ENCODE measurements at regions of chr18 and their contacts with region 1.

Region 1: GRCh38 chr18:44679056-44679905 is 1.4 kb upstream of the SETBP1 start:
- DNase-seq: no peak
- ATAC-seq: peak; percentile 87
- H3K4me3 ChIP-seq: peak overlapping the region; percentile 78
- H3K27ac ChIP-seq: peak overlapping the region; percentile 82
- H3K4me1 ChIP-seq: peaks cover 14% of the 10 kb centered on the region
- H3K27me3 ChIP-seq: peaks cover 0 to 3% of the 10 kb centered on the region in 2 experiments; a peak in 1 of 4 replicates
- CTCF ChIP-seq: peak; percentile 68 to 92 (median 76)
- EP300 ChIP-seq: no peak
- POLR2A ChIP-seq: peak; percentile 56
- RAD21 ChIP-seq: peak; percentile 90

Region 2: DNA sequence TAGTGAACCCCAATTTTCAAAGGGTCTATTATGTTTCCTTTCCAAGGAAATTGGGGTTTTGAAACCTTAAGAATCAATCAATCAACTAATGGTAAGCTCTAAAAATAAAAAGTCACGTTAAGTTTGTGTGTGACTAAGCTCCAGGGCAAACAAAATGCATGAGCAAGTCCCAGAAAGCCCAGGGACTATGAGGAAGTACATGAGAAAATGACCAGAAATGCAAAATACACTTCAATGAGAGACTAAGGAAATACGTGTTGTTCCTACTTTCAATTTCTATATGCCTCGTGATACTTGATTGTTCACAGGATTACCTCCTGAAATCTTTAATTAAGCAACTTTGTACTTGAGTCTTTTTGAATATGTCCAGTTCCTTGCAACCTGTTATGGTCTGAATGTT is 717.6 kb before region 1 on chr18:
- CTCF ChIA-PET with region 1: no interaction called
- POLR2A ChIA-PET with region 1: no interaction called
- RAD21 ChIA-PET with region 1: no interaction called
- SMC1A ChIA-PET with region 1: no interaction called
- in situ Hi-C with region 1: no loop called
- intact Hi-C with region 1: no loop called
- DNase-seq: no peak
- ATAC-seq: no peak
- H3K4me3 ChIP-seq: no peak overlapping the region
- H3K27ac ChIP-seq: no peak overlapping the region
- H3K4me1 ChIP-seq: no peaks in the 10 kb centered on the region
- H3K27me3 ChIP-seq: no peaks in the 10 kb centered on the region
- CTCF ChIP-seq: no peak
- EP300 ChIP-seq: no peak
- POLR2A ChIP-seq: no peak
- RAD21 ChIP-seq: no peak

Region 3: GRCh38 chr18:44341759-44342158 is 337.5 kb before region 1 on chr18:
- CTCF ChIA-PET with region 1: no interaction called
- POLR2A ChIA-PET with region 1: no interaction called
- RAD21 ChIA-PET with region 1: no interaction called
- SMC1A ChIA-PET with region 1: no interaction called
- in situ Hi-C with region 1: no loop called
- intact Hi-C with region 1: no loop called
- DNase-seq: no peak
- ATAC-seq: no peak
- H3K4me3 ChIP-seq: no peak overlapping the region
- H3K27ac ChIP-seq: no peak overlapping the region
- H3K4me1 ChIP-seq: no peaks in the 10 kb centered on the region
- H3K27me3 ChIP-seq: no peaks in the 10 kb centered on the region
- CTCF ChIP-seq: no peak
- EP300 ChIP-seq: no peak
- POLR2A ChIP-seq: no peak
- RAD21 ChIP-seq: no peak

Region 4: GRCh38 chr18:44700652-44701051 is 21.4 kb after region 1 on chr18:
- CTCF ChIA-PET with region 1: interaction called, 25 read pairs
- POLR2A ChIA-PET with region 1: interaction called, 4 read pairs
- RAD21 ChIA-PET with region 1: interaction called, 13 read pairs
- SMC1A ChIA-PET with region 1: interaction called, 35 read pairs
- in situ Hi-C with region 1: no loop called
- intact Hi-C with region 1: loop called (anchors 2 kb)
- DNase-seq: no peak
- ATAC-seq: peak; percentile 84
- H3K4me3 ChIP-seq: no peak overlapping the region
- H3K27ac ChIP-seq: no peak overlapping the region
- H3K4me1 ChIP-seq: peaks cover 2% of the 10 kb centered on the region
- H3K27me3 ChIP-seq: no peaks in the 10 kb centered on the region
- CTCF ChIP-seq: no peak
- EP300 ChIP-seq: no peak
- POLR2A ChIP-seq: no peak
- RAD21 ChIP-seq: no peak

Region 5: DNA sequence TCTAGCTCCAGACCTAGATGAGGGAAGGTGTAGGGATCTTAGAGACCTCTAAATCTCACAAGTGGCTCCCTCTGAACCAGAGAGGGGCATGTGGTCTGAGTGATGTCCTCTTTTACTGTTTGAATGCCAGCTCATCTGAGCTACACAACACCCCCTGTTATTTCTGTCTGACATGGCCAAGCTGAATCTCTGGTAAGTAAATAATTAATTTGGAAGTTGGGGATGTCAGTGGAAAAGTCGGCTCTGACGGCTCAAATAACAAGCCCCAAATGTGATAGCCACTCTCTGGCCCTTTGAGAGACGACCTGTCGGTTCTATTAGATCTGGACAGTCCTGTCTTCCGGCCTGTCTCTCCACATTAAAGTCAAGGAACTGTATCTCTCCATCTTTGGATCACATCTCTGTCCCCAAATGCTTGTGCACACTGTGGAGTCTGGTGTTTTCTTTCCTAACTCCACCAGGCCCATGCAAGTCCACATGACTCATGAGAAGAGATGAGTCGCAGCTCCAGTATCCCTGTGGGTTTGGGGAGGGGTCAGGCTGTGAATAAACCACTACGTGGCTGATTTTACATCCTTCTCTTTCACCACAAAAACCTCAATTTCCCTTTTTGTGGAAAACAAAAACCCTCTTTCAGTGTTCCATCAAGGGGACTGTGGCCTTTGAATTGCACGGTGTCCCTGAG is 53.9 kb after region 1 on chr18:
- CTCF ChIA-PET with region 1: interaction called, 4 read pairs
- POLR2A ChIA-PET with region 1: interaction called, 7 read pairs
- RAD21 ChIA-PET with region 1: interaction called, 11 read pairs
- SMC1A ChIA-PET with region 1: interaction called, 6 read pairs
- in situ Hi-C with region 1: no loop called
- intact Hi-C with region 1: no loop called
- DNase-seq: no peak
- ATAC-seq: peak; percentile 16; the same call in 1 of the 3 replicates
- H3K4me3 ChIP-seq: no peak overlapping the region
- H3K27ac ChIP-seq: no peak overlapping the region
- H3K4me1 ChIP-seq: peaks cover 41% of the 10 kb centered on the region
- H3K27me3 ChIP-seq: no peaks in the 10 kb centered on the region
- CTCF ChIP-seq: no peak
- EP300 ChIP-seq: no peak
- POLR2A ChIP-seq: no peak
- RAD21 ChIP-seq: no peak

Region 6: DNA sequence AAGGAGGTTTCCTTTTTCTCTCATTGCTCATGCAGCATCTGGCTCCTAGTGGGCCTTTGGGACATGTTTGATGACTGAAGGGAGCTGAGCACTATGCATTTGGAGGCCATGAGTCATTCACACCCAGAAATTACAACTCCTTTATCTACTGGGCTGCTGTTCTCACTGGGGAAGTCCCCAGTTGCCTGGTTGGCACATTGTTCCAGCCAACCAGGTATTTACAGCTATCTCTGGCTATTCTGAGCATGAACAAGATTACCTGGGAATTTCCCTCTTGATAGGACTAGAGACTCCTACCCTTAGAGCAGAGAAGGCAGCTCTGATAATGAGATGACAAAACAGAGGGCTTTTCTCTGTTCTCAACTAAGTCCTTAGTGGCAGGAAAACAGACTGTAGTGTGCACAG is 207.9 kb after region 1 on chr18:
- CTCF ChIA-PET with region 1: interaction called, 6 read pairs
- POLR2A ChIA-PET with region 1: no interaction called
- RAD21 ChIA-PET with region 1: interaction called, 16 read pairs
- SMC1A ChIA-PET with region 1: interaction called, 9 read pairs
- in situ Hi-C with region 1: no loop called
- intact Hi-C with region 1: no loop called
- DNase-seq: peak; percentile 69
- ATAC-seq: peak; percentile 95
- H3K4me3 ChIP-seq: no peak overlapping the region
- H3K27ac ChIP-seq: peak overlapping the region; percentile 36
- H3K4me1 ChIP-seq: peaks cover 14% of the 10 kb centered on the region
- H3K27me3 ChIP-seq: no peaks in the 10 kb centered on the region
- CTCF ChIP-seq: no peak
- EP300 ChIP-seq: 0 out of 4 replicates have a peak, but pooled peaks of 1 of the 2 experiments have one; percentile 44
- POLR2A ChIP-seq: no peak
- RAD21 ChIP-seq: no peak

Region 7: DNA sequence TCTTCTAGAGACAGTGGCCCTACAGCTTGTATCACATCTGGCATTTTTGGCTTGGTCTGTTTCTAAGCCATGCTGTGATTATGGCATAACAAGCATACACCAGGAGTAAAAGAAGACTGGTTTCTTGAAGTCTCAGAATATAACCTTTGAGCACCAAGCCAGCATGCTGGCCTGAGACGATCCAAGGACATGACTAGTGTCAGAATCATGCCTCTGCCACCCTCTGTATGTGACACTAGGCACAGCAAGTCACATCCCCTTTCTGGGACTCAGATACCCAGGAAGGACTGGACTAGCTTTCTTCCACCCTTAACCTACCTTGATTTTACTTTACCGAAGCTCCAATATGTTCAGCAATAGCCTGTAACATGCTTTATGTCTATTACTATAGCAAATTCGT is 346.9 kb after region 1 on chr18:
- CTCF ChIA-PET with region 1: no interaction called
- POLR2A ChIA-PET with region 1: no interaction called
- RAD21 ChIA-PET with region 1: no interaction called
- SMC1A ChIA-PET with region 1: no interaction called
- in situ Hi-C with region 1: no loop called
- intact Hi-C with region 1: loop called (anchors 10 kb)
- DNase-seq: no peak
- ATAC-seq: peak; percentile 42; the same call in 1 of the 3 replicates
- H3K4me3 ChIP-seq: no peak overlapping the region
- H3K27ac ChIP-seq: no peak overlapping the region
- H3K4me1 ChIP-seq: no peaks in the 10 kb centered on the region
- H3K27me3 ChIP-seq: no peaks in the 10 kb centered on the region
- CTCF ChIP-seq: peak in 1 of 3 experiments; percentile 15; a peak in 1 of 6 replicates
- EP300 ChIP-seq: no peak
- POLR2A ChIP-seq: no peak
- RAD21 ChIP-seq: peak; percentile 45

Region 8: DNA sequence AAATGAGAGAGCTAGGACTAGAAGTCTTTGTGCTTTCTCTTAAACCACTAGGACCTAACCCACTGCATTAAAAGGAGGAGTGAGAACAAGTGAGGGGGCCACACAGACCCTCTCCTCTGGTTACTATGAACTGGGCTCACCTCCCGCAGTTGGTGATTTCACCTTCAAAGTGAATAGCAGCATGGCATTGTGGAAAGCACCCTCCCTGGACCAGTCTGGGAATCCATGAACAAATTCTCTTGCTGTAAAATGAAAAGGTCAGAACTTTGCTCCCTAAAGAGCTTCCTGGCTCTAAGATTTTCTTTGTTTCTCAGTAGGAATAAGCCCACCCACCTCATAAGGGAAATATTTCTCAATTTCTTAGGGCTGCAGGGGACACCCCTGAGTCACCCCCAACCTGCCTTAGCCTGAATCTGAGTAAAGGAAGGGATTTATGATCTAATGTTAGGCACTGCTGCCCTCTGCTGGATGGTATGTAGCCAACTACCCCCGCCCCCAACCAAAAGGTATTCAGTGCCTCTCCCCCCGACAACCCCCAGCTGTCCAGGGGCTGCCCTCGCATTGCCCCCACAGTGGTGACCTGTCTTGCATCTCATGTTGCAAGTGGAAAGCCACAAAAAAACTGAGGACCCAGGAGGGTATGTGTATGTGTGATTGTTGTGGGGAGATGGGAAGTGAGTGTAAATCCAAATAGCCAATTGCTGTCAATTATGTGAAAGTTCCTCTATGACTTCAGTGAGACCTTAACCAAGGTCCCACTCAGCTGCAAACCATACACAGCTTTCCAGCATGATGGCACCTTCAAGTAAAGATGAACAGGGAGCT is 705.1 kb after region 1 on chr18:
- CTCF ChIA-PET with region 1: no interaction called
- POLR2A ChIA-PET with region 1: no interaction called
- RAD21 ChIA-PET with region 1: interaction called, 3 read pairs
- SMC1A ChIA-PET with region 1: no interaction called
- in situ Hi-C with region 1: no loop called
- intact Hi-C with region 1: loop called (anchors 5 kb)
- DNase-seq: peak; percentile 8
- ATAC-seq: peak; percentile 87
- H3K4me3 ChIP-seq: no peak overlapping the region
- H3K27ac ChIP-seq: no peak overlapping the region
- H3K4me1 ChIP-seq: no peaks in the 10 kb centered on the region
- H3K27me3 ChIP-seq: peaks cover 0 to 2% of the 10 kb centered on the region in 2 experiments; a peak in 1 of 4 replicates
- CTCF ChIP-seq: peak; percentile 51 to 72 (median 67); a peak in 5 of 6 replicates
- EP300 ChIP-seq: no peak
- POLR2A ChIP-seq: no peak
- RAD21 ChIP-seq: peak; percentile 83

Measured in GM12878 (cell line).